ENCODE measurements at regions of chr12 and their contacts with region 1.

Region 1: DNA sequence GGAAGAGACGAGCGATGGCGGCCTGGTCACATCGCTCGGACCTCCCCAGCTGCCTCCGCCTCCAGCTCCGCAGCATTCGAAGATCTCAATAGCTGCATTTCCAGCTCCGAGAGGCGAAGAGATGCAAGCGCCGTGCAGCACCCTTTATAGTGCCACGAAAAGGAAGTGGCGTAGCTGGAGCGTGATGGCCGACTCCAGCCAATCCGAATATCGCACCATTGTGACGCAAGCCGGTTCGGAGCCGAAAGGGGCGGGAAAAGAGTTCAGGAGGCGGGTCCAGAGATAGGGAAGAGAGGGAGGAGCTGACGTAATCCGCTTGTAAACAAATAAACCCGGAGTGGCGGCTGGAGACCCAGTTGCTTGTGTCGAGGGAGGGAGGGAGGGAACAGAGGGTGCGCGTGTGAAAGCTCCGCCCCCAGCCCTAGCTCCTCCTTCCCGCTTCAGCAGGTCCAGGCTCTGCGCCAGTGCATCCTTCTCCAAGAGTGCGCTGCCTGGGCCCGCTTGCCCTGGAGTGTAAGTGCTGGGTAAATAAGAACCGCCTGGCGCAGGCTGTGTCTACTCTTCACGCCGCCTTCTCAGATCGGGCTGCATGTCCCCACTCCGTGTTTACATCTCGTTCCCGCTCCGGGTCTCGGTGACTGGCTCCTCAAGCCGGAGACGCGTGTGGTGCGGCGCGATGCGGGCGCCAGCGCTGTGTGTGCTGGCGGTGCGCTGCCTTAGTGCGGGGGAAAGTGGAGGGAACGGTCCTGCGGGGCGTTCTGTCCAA is at the start of gene BTG1:
- DNase-seq: peak; percentile 94 to 100 (median 99)
- H3K4me3 ChIP-seq: peak within 1 kb of the TSS; percentile 98
- H3K4me3 Mint-ChIP-seq: peak within 1 kb of the TSS; percentile 95 to 100 (median 100)
- H3K27ac ChIP-seq: peak within 1 kb of the TSS; percentile 98
- H3K27ac Mint-ChIP-seq: peak within 1 kb of the TSS; percentile 95 to 100 (median 99)
- H3K4me1 ChIP-seq: peaks cover 16% of the 10 kb centered on the region
- H3K4me1 Mint-ChIP-seq: peaks cover 22 to 27% (median 25%) of the 10 kb centered on the region in 3 donors
- H3K27me3 ChIP-seq: no peaks in the 10 kb centered on the region
- H3K27me3 Mint-ChIP-seq: peaks cover 0 to 14% of the 10 kb centered on the region in 2 donors
- total RNA-seq, gene BTG1: 98.3 to 103 TPM

Region 2: GRCh38 chr12:91577586-91578539 is 568.1 kb before region 1 on chr12:
- CTCF ChIA-PET with region 1: interaction called, 15 read pairs
- POLR2A ChIA-PET with region 1: interaction called, 5 read pairs
- DNase-seq: peak in 2 of 5 donors; percentile 26 to 34
- H3K4me3 ChIP-seq: peak overlapping the region; percentile 47
- H3K4me3 Mint-ChIP-seq: peak overlapping the region; percentile 73 to 88 (median 83)
- H3K27ac ChIP-seq: no peak overlapping the region
- H3K27ac Mint-ChIP-seq: peak overlapping the region in 5 of 8 donors; percentile 63 to 92 (median 85)
- H3K4me1 ChIP-seq: peaks cover 9% of the 10 kb centered on the region
- H3K4me1 Mint-ChIP-seq: peaks cover 5 to 17% (median 7%) of the 10 kb centered on the region in 3 donors
- H3K27me3 ChIP-seq: no peaks in the 10 kb centered on the region
- H3K27me3 Mint-ChIP-seq: peaks cover under 1 to 3% of the 10 kb centered on the region in 2 donors

Region 3: GRCh38 chr12:91985002-91985787 is 160.7 kb before region 1 on chr12:
- CTCF ChIA-PET with region 1: interaction called, 5 read pairs
- POLR2A ChIA-PET with region 1: interaction called, 13 read pairs
- DNase-seq: peak in 1 of 5 donors; percentile 17
- H3K4me3 ChIP-seq: no peak overlapping the region
- H3K4me3 Mint-ChIP-seq: no peak overlapping the region
- H3K27ac ChIP-seq: no peak overlapping the region
- H3K27ac Mint-ChIP-seq: peak overlapping the region in 2 of 8 donors; percentile 68 to 74
- H3K4me1 ChIP-seq: peaks cover 13% of the 10 kb centered on the region
- H3K4me1 Mint-ChIP-seq: peaks cover 5 to 51% (median 50%) of the 10 kb centered on the region in 3 donors
- H3K27me3 ChIP-seq: no peaks in the 10 kb centered on the region
- H3K27me3 Mint-ChIP-seq: peaks cover 0 to 2% of the 10 kb centered on the region in 2 donors

Region 4: DNA sequence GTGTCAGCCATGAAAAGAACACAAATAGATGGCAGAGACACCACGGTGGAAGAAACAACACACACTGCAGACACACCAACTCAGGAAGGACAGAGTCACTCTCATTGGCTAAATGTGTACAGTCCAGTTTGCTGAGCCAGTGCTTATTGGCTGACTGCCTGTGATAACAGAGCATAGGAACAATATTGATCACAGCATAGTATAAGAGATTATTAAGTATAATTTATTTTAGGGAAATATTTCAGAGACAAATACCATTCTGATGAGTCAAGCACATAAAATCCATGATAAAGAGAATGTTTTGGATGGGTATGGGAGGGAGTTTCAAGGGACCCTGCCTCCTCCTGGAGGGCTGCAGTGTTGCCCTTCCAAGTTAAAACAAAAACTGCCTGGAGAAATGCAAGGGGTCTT is 51.2 kb before region 1 on chr12:
- CTCF ChIA-PET with region 1: no interaction called
- POLR2A ChIA-PET with region 1: no interaction called
- DNase-seq: no peak
- H3K4me3 ChIP-seq: no peak overlapping the region
- H3K4me3 Mint-ChIP-seq: no peak overlapping the region
- H3K27ac ChIP-seq: no peak overlapping the region
- H3K27ac Mint-ChIP-seq: peak overlapping the region in 2 of 8 donors; percentile 21 to 57
- H3K4me1 ChIP-seq: peaks cover 24% of the 10 kb centered on the region
- H3K4me1 Mint-ChIP-seq: peaks cover 18 to 56% (median 51%) of the 10 kb centered on the region in 3 donors
- H3K27me3 ChIP-seq: no peaks in the 10 kb centered on the region
- H3K27me3 Mint-ChIP-seq: no peaks in the 10 kb centered on the region

Region 5: GRCh38 chr12:92156704-92157395 is 10.9 kb after region 1 on chr12:
- CTCF ChIA-PET with region 1: interaction called, 4 read pairs
- POLR2A ChIA-PET with region 1: interaction called, 12 read pairs
- DNase-seq: no peak
- H3K4me3 ChIP-seq: no peak overlapping the region
- H3K4me3 Mint-ChIP-seq: peak overlapping the region in 2 of 7 donors; percentile 3 to 32
- H3K27ac ChIP-seq: no peak overlapping the region
- H3K27ac Mint-ChIP-seq: peak overlapping the region in 3 of 8 donors; percentile 20 to 72 (median 64)
- H3K4me1 ChIP-seq: peaks cover 48% of the 10 kb centered on the region
- H3K4me1 Mint-ChIP-seq: peaks cover 29 to 38% (median 30%) of the 10 kb centered on the region in 3 donors
- H3K27me3 ChIP-seq: no peaks in the 10 kb centered on the region
- H3K27me3 Mint-ChIP-seq: no peaks in the 10 kb centered on the region

Region 6: GRCh38 chr12:92199819-92200576 is 54.1 kb after region 1 on chr12:
- CTCF ChIA-PET with region 1: no interaction called
- POLR2A ChIA-PET with region 1: no interaction called
- DNase-seq: no peak
- H3K4me3 ChIP-seq: no peak overlapping the region
- H3K4me3 Mint-ChIP-seq: no peak overlapping the region
- H3K27ac ChIP-seq: no peak overlapping the region
- H3K27ac Mint-ChIP-seq: no peak overlapping the region
- H3K4me1 ChIP-seq: no peaks in the 10 kb centered on the region
- H3K4me1 Mint-ChIP-seq: peaks cover 0 to 1% (median 0%) of the 10 kb centered on the region in 3 donors
- H3K27me3 ChIP-seq: no peaks in the 10 kb centered on the region
- H3K27me3 Mint-ChIP-seq: no peaks in the 10 kb centered on the region

Region 7: DNA sequence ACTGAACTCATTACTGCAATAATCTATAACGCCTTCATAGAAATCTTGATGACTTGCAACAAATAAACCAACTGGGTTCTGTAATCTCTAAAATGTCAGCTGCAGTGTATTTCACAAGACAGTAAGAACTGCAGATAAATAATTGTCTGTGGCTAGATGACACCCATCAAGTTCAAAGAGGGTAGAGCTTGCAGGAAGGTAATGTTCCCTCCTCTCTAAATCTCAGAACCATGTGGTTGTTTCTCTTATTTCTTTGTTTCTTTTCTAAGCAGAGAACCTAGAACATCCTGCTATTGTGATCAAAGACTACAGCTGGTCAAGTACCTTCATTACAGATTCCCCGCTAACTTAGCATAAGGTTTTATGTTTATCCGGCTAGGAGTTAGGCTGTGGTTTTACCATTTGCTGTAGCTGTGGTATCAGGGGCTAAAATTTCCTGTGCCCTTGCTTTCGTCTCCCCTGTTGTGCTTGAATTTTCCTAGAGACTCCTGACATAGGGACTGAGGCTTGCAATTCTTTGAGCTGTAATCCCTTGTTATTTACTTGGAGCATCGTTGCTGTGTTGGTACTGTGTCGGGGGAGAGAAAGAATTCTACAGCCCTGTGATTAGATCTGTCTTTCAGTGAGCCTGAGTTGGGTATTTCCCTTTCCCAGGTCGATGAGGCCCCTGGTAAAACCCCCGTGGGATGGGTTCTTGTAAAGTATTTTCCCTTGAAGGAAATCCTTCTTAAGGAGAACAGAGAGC is 252.8 kb after region 1 on chr12:
- CTCF ChIA-PET with region 1: interaction called, 23 read pairs
- POLR2A ChIA-PET with region 1: interaction called, 45 read pairs
- DNase-seq: peak in 3 of 5 donors; percentile 8 to 81 (median 71)
- H3K4me3 ChIP-seq: peak overlapping the region; percentile 23
- H3K4me3 Mint-ChIP-seq: peak overlapping the region; percentile 3 to 82 (median 60)
- H3K27ac ChIP-seq: peak overlapping the region; percentile 8
- H3K27ac Mint-ChIP-seq: peak overlapping the region; percentile 68 to 97 (median 92)
- H3K4me1 ChIP-seq: peaks cover 99% of the 10 kb centered on the region
- H3K4me1 Mint-ChIP-seq: peaks cover 92 to 100% (median 99%) of the 10 kb centered on the region in 3 donors
- H3K27me3 ChIP-seq: no peaks in the 10 kb centered on the region
- H3K27me3 Mint-ChIP-seq: no peaks in the 10 kb centered on the region

Region 8: DNA sequence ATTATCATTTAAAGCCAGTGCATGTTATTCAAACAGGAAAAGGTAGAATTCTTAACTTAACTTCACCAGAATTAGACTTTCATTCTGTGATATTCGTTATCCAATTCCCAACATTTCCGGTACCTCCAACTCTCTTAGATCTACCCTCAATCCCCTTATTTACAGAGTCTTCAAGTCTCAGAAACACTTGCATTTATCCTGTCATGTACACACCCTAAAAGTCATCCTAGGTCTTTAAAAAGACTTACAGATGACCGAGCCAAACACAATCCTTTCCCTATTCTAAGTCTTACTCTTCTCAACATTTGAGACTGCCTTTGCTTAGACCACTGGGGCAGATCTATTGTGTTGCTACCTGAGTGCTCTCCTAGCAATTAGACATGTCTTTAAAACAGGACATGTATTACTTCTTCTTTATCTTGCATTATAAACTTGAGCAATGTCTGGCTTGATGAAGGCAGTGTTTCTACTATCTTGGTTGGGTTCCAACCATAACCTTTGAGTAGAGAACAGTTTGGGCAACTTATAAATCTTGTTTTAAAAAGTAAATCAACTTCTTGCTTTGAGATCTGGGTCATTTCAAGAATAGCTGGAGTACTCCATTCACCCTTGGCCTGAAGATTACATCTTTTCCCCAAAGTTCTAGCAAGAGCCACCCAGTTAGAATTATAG is 416.3 kb after region 1 on chr12:
- CTCF ChIA-PET with region 1: interaction called, 3 read pairs
- POLR2A ChIA-PET with region 1: interaction called, 12 read pairs
- DNase-seq: no peak
- H3K4me3 ChIP-seq: no peak overlapping the region
- H3K4me3 Mint-ChIP-seq: no peak overlapping the region
- H3K27ac ChIP-seq: no peak overlapping the region
- H3K27ac Mint-ChIP-seq: no peak overlapping the region
- H3K4me1 ChIP-seq: peaks cover 4% of the 10 kb centered on the region
- H3K4me1 Mint-ChIP-seq: peaks cover 14 to 41% (median 21%) of the 10 kb centered on the region in 3 donors
- H3K27me3 ChIP-seq: no peaks in the 10 kb centered on the region
- H3K27me3 Mint-ChIP-seq: no peaks in the 10 kb centered on the region

Measured in CD8-positive, alpha-beta memory T cell (primary cell).